ENCODE measurements at regions of chrX and their contacts with region 1.

Region 1: DNA sequence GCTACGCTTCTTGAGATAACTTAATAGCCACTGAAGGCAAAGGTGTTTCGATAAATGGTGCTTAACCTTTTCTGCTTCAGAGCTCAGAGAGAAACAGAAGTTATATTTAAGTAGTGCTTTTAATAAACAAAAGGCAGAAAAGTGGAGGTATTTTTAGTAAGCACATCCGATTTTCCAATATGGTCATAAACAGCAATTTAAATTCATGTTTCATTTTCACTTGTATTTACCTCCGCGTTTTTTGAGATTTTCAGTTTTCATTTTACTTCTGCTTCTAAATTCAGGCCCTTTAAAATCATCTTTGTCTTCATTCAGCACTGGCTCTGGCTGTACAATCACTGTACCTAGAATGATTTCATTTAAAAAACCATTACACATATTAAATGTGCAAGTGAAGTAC is 92.4 kb downstream of the ATRX start:
- DNase-seq: no peak
- ATAC-seq: no peak
- H3K4me3 ChIP-seq: no peak overlapping the region
- H3K4me3 Mint-ChIP-seq: no peak overlapping the region
- H3K27ac ChIP-seq: no peak overlapping the region
- H3K27ac Mint-ChIP-seq: peak overlapping the region in 1 of 2 donors; percentile 15
- H3K4me1 ChIP-seq: no peaks in the 10 kb centered on the region
- H3K4me1 Mint-ChIP-seq: peaks cover 0 to 20% (median 17%) of the 10 kb centered on the region in 3 donors
- H3K27me3 ChIP-seq: no peaks in the 10 kb centered on the region
- H3K27me3 Mint-ChIP-seq: no peaks in the 10 kb centered on the region

Region 2: DNA sequence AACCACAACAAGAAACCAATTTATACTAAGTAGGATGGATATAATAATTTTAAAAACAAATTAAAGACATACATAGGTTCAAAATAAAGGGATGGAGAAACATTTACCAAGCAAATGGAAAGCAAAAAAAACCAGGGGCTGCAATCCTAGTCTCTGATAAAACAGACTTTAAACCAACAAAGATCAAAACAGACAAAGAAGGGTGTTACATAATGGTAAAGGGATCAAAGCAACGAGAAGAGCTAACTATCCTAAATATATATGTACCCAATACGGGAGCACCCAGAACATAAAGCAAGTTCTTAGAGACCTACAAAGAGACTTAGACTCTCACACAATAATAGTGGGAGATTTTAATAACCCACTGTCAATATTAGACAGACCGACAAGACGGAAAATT is 25.8 kb after region 1 on chrX:
- CTCF ChIA-PET with region 1: interaction called in 1 of 2 experiments, 11 read pairs
- POLR2A ChIA-PET with region 1: no interaction called
- DNase-seq: no peak
- ATAC-seq: no peak
- H3K4me3 ChIP-seq: no peak overlapping the region
- H3K4me3 Mint-ChIP-seq: peak overlapping the region in 1 of 3 donors; percentile 45
- H3K27ac ChIP-seq: no peak overlapping the region
- H3K27ac Mint-ChIP-seq: peak overlapping the region in 1 of 2 donors; percentile 73
- H3K4me1 ChIP-seq: no peaks in the 10 kb centered on the region
- H3K4me1 Mint-ChIP-seq: peaks cover 28 to 61% (median 43%) of the 10 kb centered on the region in 3 donors
- H3K27me3 ChIP-seq: no peaks in the 10 kb centered on the region
- H3K27me3 Mint-ChIP-seq: peaks cover 0 to 5% of the 10 kb centered on the region in 2 donors